ENCODE measurements at regions of chr9 and their contacts with region 1.

Region 1: DNA sequence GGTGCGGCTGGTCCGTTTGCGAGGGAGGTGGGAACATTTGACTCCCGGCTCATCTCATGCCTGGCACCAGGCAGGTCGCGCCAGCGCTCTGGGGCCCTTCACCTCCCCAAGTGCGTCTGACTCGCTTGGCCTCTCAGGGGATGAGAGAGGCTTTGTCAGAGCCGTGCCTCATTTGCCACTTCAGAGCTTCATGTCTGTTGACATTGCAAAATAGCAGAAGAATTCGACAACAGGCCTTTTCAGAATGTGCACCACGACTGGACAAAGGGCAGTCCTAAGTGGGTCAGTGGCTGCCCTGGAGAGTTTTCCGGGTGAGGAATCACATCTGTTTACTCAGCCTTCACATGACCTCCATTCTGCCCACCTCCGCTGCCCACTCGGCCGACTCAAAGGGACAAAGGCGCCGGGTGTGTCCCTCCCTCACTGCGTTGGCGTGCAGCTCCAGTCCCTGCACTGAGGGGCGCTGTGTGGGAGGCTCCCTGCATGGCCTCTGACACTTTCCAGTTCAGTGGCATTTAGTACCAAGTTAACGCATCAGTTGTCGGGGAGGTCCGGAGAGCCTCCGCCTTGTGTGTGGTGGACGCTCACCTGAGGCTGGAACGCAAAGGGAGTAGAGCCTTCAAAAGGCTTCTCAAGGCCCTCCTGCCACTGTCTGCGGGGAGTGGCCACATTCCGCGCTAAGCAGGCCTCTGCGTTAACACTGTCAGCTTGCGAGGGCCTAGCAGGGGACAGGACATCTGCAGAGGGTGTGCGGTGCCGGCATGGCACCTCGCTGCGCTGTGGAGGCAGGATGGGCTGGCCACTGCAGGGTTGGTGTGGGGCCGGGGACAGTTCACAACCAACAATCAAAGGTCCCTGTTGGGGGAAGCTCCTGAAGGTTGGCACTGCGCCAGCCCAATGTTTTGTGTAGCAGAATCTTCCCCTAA is 171.5 kb downstream of the NXNL2 start:
- DNase-seq: no peak
- ATAC-seq: no peak
- H3K4me3 Mint-ChIP-seq: no peak overlapping the region
- H3K27ac Mint-ChIP-seq: no peak overlapping the region
- H3K4me1 Mint-ChIP-seq: no peaks in the 10 kb centered on the region
- H3K27me3 Mint-ChIP-seq: peaks cover 7% of the 10 kb centered on the region

Region 2: GRCh38 chr9:88786291-88787079 is 80.0 kb after region 1 on chr9:
- CTCF ChIA-PET with region 1: no interaction called
- POLR2A ChIA-PET with region 1: interaction called, 14 read pairs
- intact Hi-C with region 1: no loop called
- DNase-seq: no peak
- ATAC-seq: no peak
- H3K4me3 Mint-ChIP-seq: no peak overlapping the region
- H3K27ac Mint-ChIP-seq: no peak overlapping the region
- H3K4me1 Mint-ChIP-seq: peaks cover 16% of the 10 kb centered on the region
- H3K27me3 Mint-ChIP-seq: peaks cover 26% of the 10 kb centered on the region